Naive thymus-derived CD4-positive, alpha-beta T cell (primary cell): ENCODE measurements at regions of chr13 and their contacts with region 1.

Region 1: GRCh38 chr13:48448959-48449614 is 36.2 kb upstream of the LPAR6 start:
- DNase-seq: no peak
- ATAC-seq: no peak
- H3K4me3 ChIP-seq: no peak overlapping the region
- H3K4me3 Mint-ChIP-seq: peak overlapping the region; percentile 4 to 79 (median 70)
- H3K27ac ChIP-seq: no peak overlapping the region
- H3K27ac Mint-ChIP-seq: peak overlapping the region in 4 of 9 donors; percentile 3 to 61 (median 42)
- H3K4me1 ChIP-seq: peaks cover 0 to 5% of the 10 kb centered on the region in 2 donors
- H3K4me1 Mint-ChIP-seq: peaks cover 12 to 46% (median 35%) of the 10 kb centered on the region in 7 donors
- H3K27me3 ChIP-seq: no peaks in the 10 kb centered on the region
- H3K27me3 Mint-ChIP-seq: no peaks in the 10 kb centered on the region

Region 2: DNA sequence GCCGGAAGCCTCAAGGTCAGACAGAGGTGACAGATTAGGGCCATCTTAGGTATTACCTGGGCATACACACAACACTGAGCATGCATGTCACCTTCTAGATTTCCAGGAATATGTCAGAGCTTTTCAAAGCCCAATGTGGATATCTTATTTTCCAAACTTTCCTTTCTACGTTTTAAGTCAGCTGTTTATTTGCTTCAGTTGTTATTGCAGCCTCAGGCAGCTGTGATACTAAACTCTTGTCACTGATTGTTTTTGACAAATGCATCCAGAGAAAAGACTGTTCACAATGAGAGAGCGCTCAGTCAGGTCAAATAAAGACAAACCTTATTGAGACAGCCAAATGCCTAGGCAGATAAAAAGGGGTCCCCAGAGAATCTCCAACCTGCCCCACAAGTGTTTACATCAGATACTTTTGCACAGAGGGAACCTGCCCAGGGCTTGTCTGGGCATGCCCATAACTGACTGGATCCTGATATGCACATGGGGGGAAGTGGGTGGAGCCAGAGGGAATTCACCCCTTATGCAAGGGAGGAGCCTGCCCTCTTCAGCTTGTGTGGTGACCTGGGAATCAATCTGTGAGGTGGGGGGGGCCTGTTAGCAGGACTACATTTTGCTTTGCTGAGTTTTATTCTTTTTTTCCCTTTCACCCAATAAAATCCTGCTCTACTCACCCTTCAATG is 382.6 kb before region 1 on chr13:
- CTCF ChIA-PET with region 1: no interaction called
- POLR2A ChIA-PET with region 1: no interaction called
- intact Hi-C with region 1: no loop called
- DNase-seq: peak in 2 of 9 donors; percentile 5 to 28
- ATAC-seq: no peak
- H3K4me3 ChIP-seq: no peak overlapping the region
- H3K4me3 Mint-ChIP-seq: no peak overlapping the region
- H3K27ac ChIP-seq: no peak overlapping the region
- H3K27ac Mint-ChIP-seq: peak overlapping the region in 4 of 9 donors; percentile 5 to 78 (median 42)
- H3K4me1 ChIP-seq: no peaks in the 10 kb centered on the region
- H3K4me1 Mint-ChIP-seq: peaks cover 0 to 14% (median 2%) of the 10 kb centered on the region in 7 donors
- H3K27me3 ChIP-seq: no peaks in the 10 kb centered on the region
- H3K27me3 Mint-ChIP-seq: no peaks in the 10 kb centered on the region

Region 3: DNA sequence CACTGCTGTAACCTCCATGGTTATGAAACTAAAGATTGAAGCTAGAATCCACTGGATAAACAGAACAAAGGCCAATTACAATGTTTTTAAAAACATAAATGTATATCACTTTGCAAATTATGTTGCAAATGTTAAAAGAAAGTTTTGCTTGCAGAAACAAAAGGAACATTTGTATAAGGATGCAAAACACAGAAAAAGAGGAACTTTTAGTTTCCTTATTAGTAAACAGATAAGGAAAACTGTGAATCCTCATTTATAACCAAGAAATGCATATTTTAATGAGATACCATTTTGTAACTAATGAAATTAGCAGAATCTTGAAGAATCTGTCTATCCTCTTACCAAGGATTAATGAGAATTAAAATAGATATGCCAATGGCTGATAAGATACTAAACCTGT is 68.5 kb before region 1 on chr13:
- CTCF ChIA-PET with region 1: no interaction called
- POLR2A ChIA-PET with region 1: no interaction called
- intact Hi-C with region 1: no loop called
- DNase-seq: no peak
- ATAC-seq: no peak
- H3K4me3 ChIP-seq: no peak overlapping the region
- H3K4me3 Mint-ChIP-seq: no peak overlapping the region
- H3K27ac ChIP-seq: no peak overlapping the region
- H3K27ac Mint-ChIP-seq: no peak overlapping the region
- H3K4me1 ChIP-seq: no peaks in the 10 kb centered on the region
- H3K4me1 Mint-ChIP-seq: peaks cover 0 to 6% (median 0%) of the 10 kb centered on the region in 7 donors
- H3K27me3 ChIP-seq: no peaks in the 10 kb centered on the region
- H3K27me3 Mint-ChIP-seq: no peaks in the 10 kb centered on the region

Region 4: GRCh38 chr13:48400850-48401291 is 48.2 kb before region 1 on chr13:
- CTCF ChIA-PET with region 1: no interaction called
- POLR2A ChIA-PET with region 1: no interaction called
- intact Hi-C with region 1: loop called in 1 of 2 experiments (anchors 2 kb)
- DNase-seq: peak in 2 of 9 donors; percentile 36 to 42
- ATAC-seq: peak; percentile 74
- H3K4me3 ChIP-seq: no peak overlapping the region
- H3K4me3 Mint-ChIP-seq: peak overlapping the region; percentile 1 to 83 (median 54)
- H3K27ac ChIP-seq: peak overlapping the region; percentile 49
- H3K27ac Mint-ChIP-seq: peak overlapping the region; percentile 1 to 90 (median 50)
- H3K4me1 ChIP-seq: peaks cover 33 to 40% of the 10 kb centered on the region in 2 donors
- H3K4me1 Mint-ChIP-seq: peaks cover 23 to 78% (median 63%) of the 10 kb centered on the region in 7 donors
- H3K27me3 ChIP-seq: no peaks in the 10 kb centered on the region
- H3K27me3 Mint-ChIP-seq: no peaks in the 10 kb centered on the region

Region 5: DNA sequence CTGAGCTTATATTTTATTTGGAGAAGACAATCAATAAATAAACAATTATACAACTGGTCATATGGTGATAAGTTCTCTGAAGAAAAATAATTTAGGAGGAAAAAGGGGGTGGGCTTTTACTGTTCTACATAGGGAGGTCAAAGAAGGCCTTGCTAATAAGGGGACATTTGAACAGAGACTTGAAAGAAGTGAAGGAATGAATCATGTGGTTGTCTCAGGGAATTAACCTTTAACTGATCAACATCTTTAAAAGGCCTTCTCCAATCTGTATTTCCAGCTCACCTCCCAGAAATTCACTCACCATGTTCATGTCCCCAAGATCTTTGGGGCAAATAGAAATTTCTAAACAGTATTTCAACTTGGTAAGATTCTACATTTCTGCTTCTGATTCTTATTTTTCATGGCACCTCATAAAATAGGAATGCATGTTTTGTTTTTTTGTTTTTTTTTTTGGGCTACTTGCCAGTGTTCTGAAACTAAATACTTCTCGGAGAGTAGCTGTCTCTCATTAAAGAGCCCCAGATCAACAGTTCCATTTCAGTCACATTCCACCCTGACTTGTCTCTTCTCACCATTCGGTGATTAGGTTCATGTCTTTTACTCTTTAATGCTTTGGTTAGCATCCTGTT is 17.0 kb before region 1 on chr13:
- CTCF ChIA-PET with region 1: no interaction called
- POLR2A ChIA-PET with region 1: interaction called, 4 read pairs
- intact Hi-C with region 1: loop called in 1 of 2 experiments (anchors 2 kb)
- DNase-seq: no peak
- ATAC-seq: no peak
- H3K4me3 ChIP-seq: no peak overlapping the region
- H3K4me3 Mint-ChIP-seq: peak overlapping the region in 9 of 10 donors; percentile 11 to 79 (median 54)
- H3K27ac ChIP-seq: no peak overlapping the region
- H3K27ac Mint-ChIP-seq: peak overlapping the region; percentile 0 to 91 (median 50)
- H3K4me1 ChIP-seq: peaks cover 10 to 32% of the 10 kb centered on the region in 2 donors
- H3K4me1 Mint-ChIP-seq: peaks cover 22 to 68% (median 59%) of the 10 kb centered on the region in 7 donors
- H3K27me3 ChIP-seq: no peaks in the 10 kb centered on the region
- H3K27me3 Mint-ChIP-seq: no peaks in the 10 kb centered on the region

Region 6: DNA sequence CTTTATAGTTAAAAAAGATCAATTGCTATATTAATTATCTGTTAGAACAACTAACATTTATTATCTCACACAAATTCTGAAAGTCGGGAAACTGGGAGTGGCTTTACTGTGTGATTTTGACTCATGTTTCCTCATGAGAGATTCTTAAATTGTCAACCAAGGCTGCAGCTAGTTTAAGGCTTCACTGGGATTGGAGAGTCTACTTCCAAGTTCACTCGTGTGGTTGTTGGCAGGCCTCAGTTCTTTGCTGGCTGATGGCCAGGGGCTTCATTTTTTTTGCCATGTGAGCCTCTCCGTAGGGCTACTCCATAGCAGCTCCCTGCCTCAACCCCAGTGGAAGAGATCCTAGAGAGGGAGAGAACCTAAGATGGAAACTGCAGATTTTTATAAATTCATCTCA is 11.7 kb before region 1 on chr13:
- CTCF ChIA-PET with region 1: no interaction called
- POLR2A ChIA-PET with region 1: interaction called, 4 read pairs
- intact Hi-C with region 1: loop called in 1 of 2 experiments (anchors 1 kb)
- DNase-seq: no peak
- ATAC-seq: no peak
- H3K4me3 ChIP-seq: no peak overlapping the region
- H3K4me3 Mint-ChIP-seq: no peak overlapping the region
- H3K27ac ChIP-seq: no peak overlapping the region
- H3K27ac Mint-ChIP-seq: peak overlapping the region in 2 of 9 donors; percentile 49 to 75
- H3K4me1 ChIP-seq: peaks cover 0 to 15% of the 10 kb centered on the region in 2 donors
- H3K4me1 Mint-ChIP-seq: peaks cover 11 to 48% (median 35%) of the 10 kb centered on the region in 7 donors
- H3K27me3 ChIP-seq: no peaks in the 10 kb centered on the region
- H3K27me3 Mint-ChIP-seq: no peaks in the 10 kb centered on the region

Region 7: GRCh38 chr13:48492470-48493065 is 43.5 kb after region 1 on chr13:
- CTCF ChIA-PET with region 1: no interaction called
- POLR2A ChIA-PET with region 1: interaction called, 5 read pairs
- intact Hi-C with region 1: loop called in 1 of 2 experiments (anchors 2 kb)
- DNase-seq: peak; percentile 38 to 79 (median 74)
- ATAC-seq: peak; percentile 91
- H3K4me3 ChIP-seq: peak overlapping the region; percentile 73
- H3K4me3 Mint-ChIP-seq: no peak overlapping the region
- H3K27ac ChIP-seq: peak overlapping the region; percentile 74
- H3K27ac Mint-ChIP-seq: no peak overlapping the region
- H3K4me1 ChIP-seq: peaks cover 67% of the 10 kb centered on the region in 2 donors
- H3K4me1 Mint-ChIP-seq: peaks cover 1 to 55% (median 34%) of the 10 kb centered on the region in 7 donors
- H3K27me3 ChIP-seq: no peaks in the 10 kb centered on the region
- H3K27me3 Mint-ChIP-seq: no peaks in the 10 kb centered on the region